CD14-positive monocyte (primary cell): ENCODE measurements at regions of chr12 and their contacts with region 1.

Region 1: GRCh38 chr12:106136263-106136662 is 2.5 kb downstream of the NUAK1 start:
- DNase-seq: peak; percentile 25 to 45 (median 43)
- H3K4me3 ChIP-seq: no peak overlapping the region
- H3K4me3 Mint-ChIP-seq: peak overlapping the region in 1 of 2 donors; percentile 52
- H3K27ac ChIP-seq: no peak overlapping the region
- H3K27ac Mint-ChIP-seq: no peak overlapping the region
- H3K4me1 ChIP-seq: peaks cover 7 to 19% of the 10 kb centered on the region in 2 donors
- H3K4me1 Mint-ChIP-seq: peaks cover 5% of the 10 kb centered on the region
- H3K27me3 ChIP-seq: peaks cover 53 to 54% of the 10 kb centered on the region in 2 donors
- H3K27me3 Mint-ChIP-seq: peaks cover 58 to 73% (median 60%) of the 10 kb centered on the region in 3 donors
- CTCF ChIP-seq: peak; percentile 90

Region 2: DNA sequence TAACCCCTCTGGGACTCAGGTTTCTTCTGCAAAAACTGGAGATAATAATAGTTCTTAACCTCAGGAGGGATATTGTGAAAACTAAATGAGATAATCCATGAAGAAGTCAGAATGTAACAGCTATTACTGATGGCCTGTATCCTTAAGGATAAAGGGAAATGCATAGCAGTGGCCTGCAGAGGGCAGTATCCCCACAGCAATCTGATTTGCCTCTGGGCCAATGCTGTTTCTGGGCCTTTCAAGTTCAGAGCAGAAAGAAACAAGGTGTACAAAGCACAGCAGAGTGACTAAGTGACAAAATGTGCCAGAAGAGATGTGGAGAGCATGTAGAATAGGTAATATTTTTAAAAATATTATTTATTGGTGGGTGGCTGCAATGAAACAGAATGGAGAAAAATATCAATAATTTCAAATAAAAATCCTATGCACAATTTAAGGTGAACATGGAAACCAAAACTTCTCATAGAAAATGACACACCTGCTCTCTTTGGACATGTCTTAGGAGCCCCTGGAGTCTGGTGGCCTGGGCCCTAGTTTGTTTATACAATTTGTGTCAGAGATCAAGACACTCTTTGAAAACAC is 715.5 kb before region 1 on chr12:
- intact Hi-C with region 1: loop called (anchors 1 to 2 kb)
- DNase-seq: peak; percentile 7 to 44 (median 38)
- H3K4me3 ChIP-seq: no peak overlapping the region
- H3K4me3 Mint-ChIP-seq: no peak overlapping the region
- H3K27ac ChIP-seq: no peak overlapping the region
- H3K27ac Mint-ChIP-seq: no peak overlapping the region
- H3K4me1 ChIP-seq: no peaks in the 10 kb centered on the region
- H3K4me1 Mint-ChIP-seq: no peaks in the 10 kb centered on the region
- H3K27me3 ChIP-seq: peaks cover 0 to 2% of the 10 kb centered on the region in 2 donors
- H3K27me3 Mint-ChIP-seq: peaks cover 14 to 16% (median 15%) of the 10 kb centered on the region in 3 donors
- CTCF ChIP-seq: peak; percentile 89

Region 3: DNA sequence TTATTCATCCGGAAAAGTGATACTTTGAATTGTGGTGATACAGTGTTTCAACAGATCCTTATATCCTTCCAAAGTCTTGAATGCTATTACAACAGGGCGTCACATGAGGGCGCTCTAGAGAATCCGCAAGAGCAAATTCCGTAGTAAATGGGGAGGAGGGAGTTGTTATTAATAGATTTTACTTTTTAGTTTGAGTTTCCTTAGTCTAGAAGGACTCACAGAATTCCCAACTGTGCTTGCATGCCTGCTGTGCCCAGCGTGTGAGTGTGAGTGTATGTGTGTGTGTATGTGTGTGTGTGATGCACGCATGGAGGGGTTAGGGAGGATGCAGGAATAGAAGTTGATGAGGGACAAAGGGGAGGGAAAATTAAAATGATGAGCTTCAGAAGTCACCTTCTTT is 430.5 kb before region 1 on chr12:
- intact Hi-C with region 1: loop called in 1 of 2 experiments (anchors 10 kb)
- DNase-seq: no peak
- H3K4me3 ChIP-seq: no peak overlapping the region
- H3K4me3 Mint-ChIP-seq: no peak overlapping the region
- H3K27ac ChIP-seq: no peak overlapping the region
- H3K27ac Mint-ChIP-seq: peak overlapping the region in 1 of 7 donors; percentile 72
- H3K4me1 ChIP-seq: no peaks in the 10 kb centered on the region
- H3K4me1 Mint-ChIP-seq: no peaks in the 10 kb centered on the region
- H3K27me3 ChIP-seq: peaks cover 0 to 2% of the 10 kb centered on the region in 2 donors
- H3K27me3 Mint-ChIP-seq: peaks cover 2 to 5% (median 3%) of the 10 kb centered on the region in 3 donors
- CTCF ChIP-seq: peak; percentile 64